RWPE1 (cell line): ENCODE measurements at regions of chr1 and their contacts with region 1.

Region 1: GRCh38 chr1:169550294-169550693 is 36.0 kb downstream of the F5 start:
- DNase-seq: peak; percentile 53
- H3K27ac ChIP-seq: no peak overlapping the region
- CTCF ChIP-seq: peak; percentile 43

Region 2: DNA sequence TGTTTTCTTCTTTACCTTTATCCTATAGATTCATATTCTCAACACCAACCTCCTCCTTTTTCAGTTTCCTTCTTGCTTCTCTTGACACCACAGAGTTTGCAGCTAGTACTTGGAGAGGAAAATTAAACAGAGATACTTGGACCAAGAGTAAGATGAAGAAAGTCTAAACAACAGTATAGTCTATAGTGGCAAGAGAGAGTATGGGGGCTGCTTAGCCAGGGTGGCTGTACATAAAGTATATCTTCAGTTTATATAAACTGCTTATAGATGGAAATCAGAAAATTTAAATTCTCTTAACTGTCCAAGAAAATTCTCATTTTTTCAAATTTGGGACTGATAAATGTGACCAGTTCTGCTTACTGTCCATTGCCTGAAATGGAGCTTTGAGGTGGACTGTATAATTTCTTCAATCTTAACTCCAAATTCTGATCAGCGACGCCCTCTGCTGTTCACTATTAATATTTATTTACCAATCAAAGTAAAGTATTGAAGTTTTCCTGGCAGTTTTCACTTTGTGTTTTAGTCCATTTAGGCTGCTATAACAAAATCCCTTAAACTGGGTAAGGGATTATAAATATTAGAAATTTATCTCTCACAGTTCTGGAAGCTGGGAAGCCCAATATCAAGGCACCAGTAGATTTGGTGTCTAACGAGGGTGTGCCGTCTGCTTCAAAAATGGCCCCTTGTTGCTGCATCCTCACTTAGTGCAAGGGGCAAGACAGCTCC is 259.2 kb after region 1 on chr1:
- CTCF ChIA-PET with region 1: interaction called, 10 read pairs
- POLR2A ChIA-PET with region 1: no interaction called
- DNase-seq: peak; percentile 26
- H3K27ac ChIP-seq: no peak overlapping the region
- CTCF ChIP-seq: peak; percentile 67